GM10248 (cell line): ENCODE measurements at regions of chr5 and their contacts with region 1.

Region 1: DNA sequence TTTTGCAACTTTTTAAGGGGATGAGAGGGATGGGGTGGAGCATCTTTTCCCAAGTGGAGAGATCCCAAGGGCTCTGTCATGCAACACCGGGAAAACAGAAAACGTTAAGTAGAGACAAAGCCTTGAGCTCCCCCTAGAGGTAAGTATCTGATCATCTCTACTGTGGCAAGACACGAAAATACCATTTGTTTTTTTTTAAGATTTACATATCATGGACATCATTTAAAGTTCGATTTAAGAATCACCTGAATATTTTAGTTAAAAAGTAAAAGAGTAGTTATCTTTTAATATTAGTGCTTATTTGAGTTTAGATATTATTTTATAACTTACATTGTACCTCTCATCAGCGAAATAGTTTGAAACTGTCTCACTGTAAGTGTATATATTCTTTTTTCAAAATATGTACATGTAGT is 200.4 kb downstream of the LRRC70 start:
- DNase-seq: peak; percentile 62
- CTCF ChIP-seq: peak; percentile 53

Region 2: GRCh38 chr5:62718368-62718767 is 60.6 kb before region 1 on chr5:
- CTCF ChIA-PET with region 1: no interaction called
- POLR2A ChIA-PET with region 1: no interaction called
- DNase-seq: no peak
- CTCF ChIP-seq: no peak

Region 3: DNA sequence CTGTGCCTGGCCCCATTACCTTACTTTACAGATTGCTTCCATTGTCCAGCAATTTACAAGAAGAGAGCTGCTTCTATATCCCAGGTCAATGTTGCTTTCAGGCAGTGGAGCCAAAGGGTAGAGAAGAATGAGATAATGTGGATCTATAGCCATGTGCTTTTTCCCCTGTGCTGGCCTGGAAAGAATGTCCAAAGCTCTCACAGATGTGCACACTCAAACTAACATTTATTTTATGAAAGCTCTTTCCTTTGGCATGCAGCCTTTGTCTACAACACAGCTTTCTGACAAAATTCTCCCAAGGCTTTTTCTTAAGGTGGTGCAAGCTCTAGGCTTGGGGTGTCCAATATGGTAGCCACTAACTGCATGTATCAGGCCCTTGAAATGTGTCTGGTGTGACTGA is 16.9 kb after region 1 on chr5:
- CTCF ChIA-PET with region 1: interaction called, 12 read pairs
- POLR2A ChIA-PET with region 1: no interaction called
- DNase-seq: no peak
- CTCF ChIP-seq: no peak

Region 4: GRCh38 chr5:62812621-62813255 is 33.7 kb after region 1 on chr5:
- CTCF ChIA-PET with region 1: no interaction called
- POLR2A ChIA-PET with region 1: no interaction called
- DNase-seq: no peak
- CTCF ChIP-seq: no peak

Region 5: DNA sequence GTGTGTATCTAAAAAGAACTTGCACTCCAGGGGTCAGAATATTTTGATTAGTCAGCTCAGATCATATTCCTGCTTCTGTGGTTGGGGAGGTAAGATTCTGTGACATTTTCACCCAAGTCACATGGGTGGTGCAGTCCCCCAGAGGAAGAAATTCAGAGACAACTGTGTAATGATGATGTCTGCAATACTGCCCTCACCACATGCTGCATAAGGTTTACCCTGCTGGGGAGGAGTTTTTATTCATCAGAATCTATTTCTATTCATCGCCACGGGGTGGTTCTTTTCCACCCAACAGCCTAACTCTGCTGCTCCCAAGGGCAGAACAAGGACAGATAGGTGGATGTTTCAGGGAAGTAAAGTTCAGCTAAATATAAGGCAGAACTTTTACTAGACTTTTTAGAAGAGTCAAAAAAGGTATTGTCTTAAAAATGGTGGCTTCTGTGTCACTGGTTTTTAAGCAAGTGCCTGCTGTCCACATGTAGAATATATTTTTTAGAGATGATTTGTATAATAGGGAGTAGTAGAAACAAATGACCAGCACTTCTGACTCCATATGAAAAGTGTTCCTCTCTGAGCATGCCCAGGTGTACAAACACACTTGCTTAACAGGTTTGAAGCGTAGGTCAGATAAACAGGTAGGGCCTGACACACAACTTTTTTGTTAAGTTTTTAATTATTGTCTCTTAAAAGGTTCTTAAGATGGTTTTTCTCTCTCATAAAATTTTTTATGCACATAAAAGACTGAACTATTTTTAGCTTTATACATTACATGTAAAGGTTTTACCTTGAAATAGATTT is 152.3 kb after region 1 on chr5:
- CTCF ChIA-PET with region 1: no interaction called
- POLR2A ChIA-PET with region 1: no interaction called
- DNase-seq: no peak
- CTCF ChIP-seq: no peak

Region 6: DNA sequence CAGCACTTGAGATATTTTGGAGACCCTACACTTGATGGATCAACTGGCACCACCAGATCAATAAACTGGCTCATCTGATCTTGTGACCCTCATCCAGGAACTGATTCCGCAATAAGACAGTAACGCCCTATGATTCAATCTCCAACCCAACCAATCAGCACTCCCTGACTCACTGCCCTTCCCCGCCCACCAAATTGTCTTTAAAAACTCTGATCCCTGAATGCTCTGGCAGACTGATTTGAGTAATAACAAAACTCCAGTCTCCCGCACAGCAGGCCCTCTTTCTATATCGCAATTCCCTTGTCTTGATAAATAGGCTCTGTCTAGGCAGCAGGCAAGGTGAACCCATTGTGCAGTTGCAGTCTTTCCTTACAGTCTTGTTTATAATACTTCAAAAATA is 476.6 kb after region 1 on chr5:
- CTCF ChIA-PET with region 1: no interaction called
- POLR2A ChIA-PET with region 1: no interaction called
- DNase-seq: no peak
- CTCF ChIP-seq: no peak